ENCODE measurements at regions of chr14 and their contacts with region 1.

Region 1: GRCh38 chr14:32967421-32967820 is 28.7 kb downstream of the NPAS3 start:
- DNase-seq: no peak
- ATAC-seq: no peak
- H3K4me3 ChIP-seq: no peak overlapping the region
- H3K4me3 Mint-ChIP-seq: no peak overlapping the region
- H3K27ac ChIP-seq: no peak overlapping the region
- H3K27ac Mint-ChIP-seq: no peak overlapping the region
- H3K4me1 ChIP-seq: no peaks in the 10 kb centered on the region
- H3K4me1 Mint-ChIP-seq: no peaks in the 10 kb centered on the region
- H3K27me3 ChIP-seq: no peaks in the 10 kb centered on the region
- H3K27me3 Mint-ChIP-seq: no peaks in the 10 kb centered on the region

Region 2: GRCh38 chr14:32939254-32940065 is 28.0 kb before region 1 on chr14:
- CTCF ChIA-PET with region 1: no interaction called
- POLR2A ChIA-PET with region 1: interaction called in 1 of 2 experiments, 10 read pairs
- DNase-seq: peak in 1 of 35 experiments; percentile 17
- ATAC-seq: peak in 3 of 4 experiments; percentile 12 to 57 (median 25)
- H3K4me3 ChIP-seq: peak overlapping the region in 1 of 2 donors; percentile 54
- H3K4me3 Mint-ChIP-seq: peak overlapping the region; percentile 67 to 84 (median 81)
- H3K27ac ChIP-seq: no peak overlapping the region
- H3K27ac Mint-ChIP-seq: no peak overlapping the region
- H3K4me1 ChIP-seq: peaks cover 0 to 7% of the 10 kb centered on the region in 2 experiments
- H3K4me1 Mint-ChIP-seq: peaks cover 12 to 18% (median 14%) of the 10 kb centered on the region in 3 donors
- H3K27me3 ChIP-seq: peaks cover 8 to 34% of the 10 kb centered on the region in 2 experiments
- H3K27me3 Mint-ChIP-seq: peaks cover 53 to 58% of the 10 kb centered on the region in 2 donors

Measured in T-cell (primary cell).